ENCODE measurements at regions of chr3 and their contacts with region 1.

Region 1: GRCh38 chr3:46297658-46298463 is 55.6 kb downstream of the CCR3 start:
- DNase-seq: no peak
- H3K4me3 Mint-ChIP-seq: no peak overlapping the region
- H3K27ac Mint-ChIP-seq: no peak overlapping the region
- H3K4me1 Mint-ChIP-seq: peaks cover 89% of the 10 kb centered on the region
- H3K27me3 Mint-ChIP-seq: peaks cover 8% of the 10 kb centered on the region

Region 2: GRCh38 chr3:45915518-45916231 is 382.2 kb before region 1 on chr3:
- CTCF ChIA-PET with region 1: no interaction called
- POLR2A ChIA-PET with region 1: no interaction called
- intact Hi-C with region 1: loop called (anchors 1 kb)
- DNase-seq: peak; percentile 91
- H3K4me3 Mint-ChIP-seq: peak overlapping the region; percentile 46
- H3K27ac Mint-ChIP-seq: peak overlapping the region; percentile 61
- H3K4me1 Mint-ChIP-seq: peaks cover 44% of the 10 kb centered on the region
- H3K27me3 Mint-ChIP-seq: peaks cover 19% of the 10 kb centered on the region

Region 3: DNA sequence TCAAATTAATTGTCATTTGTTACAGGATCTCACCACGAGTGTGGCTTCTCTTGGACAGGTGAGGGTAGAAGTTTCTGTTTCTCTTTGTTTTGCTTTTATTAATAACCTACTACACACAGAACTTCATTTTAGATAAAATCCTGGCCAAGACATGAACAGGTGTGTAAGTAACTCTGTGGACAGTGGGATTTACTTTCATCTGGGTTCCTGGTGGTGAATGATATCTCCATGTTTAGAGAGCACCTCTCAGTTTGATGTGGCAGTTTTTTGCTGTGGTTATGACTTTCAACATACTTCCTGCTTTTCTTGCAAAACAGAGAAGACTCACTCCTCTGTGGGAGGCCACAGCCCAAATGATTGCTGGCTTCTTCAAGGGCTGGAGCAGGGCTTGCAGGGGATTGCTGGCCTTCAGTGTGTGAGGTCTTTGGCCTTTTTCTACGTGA is 199.5 kb before region 1 on chr3:
- CTCF ChIA-PET with region 1: interaction called, 3 read pairs
- POLR2A ChIA-PET with region 1: no interaction called
- intact Hi-C with region 1: loop called (anchors 1 kb)
- DNase-seq: peak; percentile 76
- H3K4me3 Mint-ChIP-seq: peak overlapping the region; percentile 36
- H3K27ac Mint-ChIP-seq: peak overlapping the region; percentile 85
- H3K4me1 Mint-ChIP-seq: peaks cover 42% of the 10 kb centered on the region
- H3K27me3 Mint-ChIP-seq: peaks cover 30% of the 10 kb centered on the region

Region 4: GRCh38 chr3:46276502-46277099 is 21.3 kb before region 1 on chr3:
- CTCF ChIA-PET with region 1: interaction called, 13 read pairs
- POLR2A ChIA-PET with region 1: interaction called, 8 read pairs
- intact Hi-C with region 1: loop called (anchors 1 kb)
- DNase-seq: peak; percentile 87
- H3K4me3 Mint-ChIP-seq: no peak overlapping the region
- H3K27ac Mint-ChIP-seq: no peak overlapping the region
- H3K4me1 Mint-ChIP-seq: peaks cover 43% of the 10 kb centered on the region
- H3K27me3 Mint-ChIP-seq: peaks cover 28% of the 10 kb centered on the region

Region 5: GRCh38 chr3:46349485-46350261 is 51.8 kb after region 1 on chr3:
- CTCF ChIA-PET with region 1: interaction called, 6 read pairs
- POLR2A ChIA-PET with region 1: interaction called, 11 read pairs
- intact Hi-C with region 1: no loop called
- DNase-seq: no peak
- H3K4me3 Mint-ChIP-seq: no peak overlapping the region
- H3K27ac Mint-ChIP-seq: peak overlapping the region; percentile 73
- H3K4me1 Mint-ChIP-seq: peaks cover 58% of the 10 kb centered on the region
- H3K27me3 Mint-ChIP-seq: peaks cover 17% of the 10 kb centered on the region

Region 6: DNA sequence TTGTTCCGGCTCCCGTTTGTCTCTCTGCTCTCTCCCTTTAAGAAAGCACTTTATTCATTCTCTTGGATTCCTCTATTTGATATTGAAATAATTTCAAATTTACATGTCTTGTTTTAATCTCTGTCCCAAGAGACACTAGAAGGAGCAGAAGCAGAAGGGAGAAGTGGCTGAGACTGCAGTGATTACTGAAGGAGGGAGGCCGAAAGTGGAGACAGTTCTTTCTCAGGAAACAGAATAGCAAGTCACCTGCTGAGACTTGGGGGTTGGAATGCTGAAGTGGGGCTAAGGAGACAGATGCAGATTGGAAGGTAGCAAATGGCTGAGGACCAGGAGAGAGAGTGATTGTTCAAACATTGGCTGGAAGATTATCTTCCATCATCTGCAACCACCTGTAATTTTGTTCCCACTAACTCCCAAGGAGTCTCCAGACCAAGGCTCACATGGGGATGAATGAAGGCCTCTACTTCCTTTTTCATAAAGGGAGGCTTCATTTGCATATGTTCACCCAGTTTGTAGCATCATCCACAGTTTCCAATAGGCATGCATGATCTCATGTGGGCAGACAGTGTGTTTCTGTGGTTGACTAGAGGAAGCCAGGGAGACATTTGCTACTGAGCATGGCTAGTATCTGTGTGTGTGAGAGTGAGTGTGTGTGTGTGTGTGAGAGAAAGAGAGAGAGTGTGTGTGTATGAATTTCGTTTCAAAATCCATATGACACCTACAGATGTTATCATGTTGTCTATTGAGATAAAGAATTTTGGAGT is 142.9 kb after region 1 on chr3:
- CTCF ChIA-PET with region 1: no interaction called
- POLR2A ChIA-PET with region 1: no interaction called
- intact Hi-C with region 1: no loop called
- DNase-seq: peak; percentile 47
- H3K4me3 Mint-ChIP-seq: no peak overlapping the region
- H3K27ac Mint-ChIP-seq: no peak overlapping the region
- H3K4me1 Mint-ChIP-seq: peaks cover 17% of the 10 kb centered on the region
- H3K27me3 Mint-ChIP-seq: no peaks in the 10 kb centered on the region